Aorta (tissue), 5 donors: ENCODE measurements at regions of chr2 and their contacts with region 1.

Region 1: GRCh38 chr2:236343400-236344161 is 79.4 kb upstream of the ASB18 start:
- DNase-seq: peak in 1 of 2 donors; percentile 67
- ATAC-seq: no peak
- H3K4me3 ChIP-seq: no peak overlapping the region
- H3K27ac ChIP-seq: no peak overlapping the region
- H3K4me1 ChIP-seq: no peaks in the 10 kb centered on the region
- H3K27me3 ChIP-seq: no peaks in the 10 kb centered on the region

Region 2: DNA sequence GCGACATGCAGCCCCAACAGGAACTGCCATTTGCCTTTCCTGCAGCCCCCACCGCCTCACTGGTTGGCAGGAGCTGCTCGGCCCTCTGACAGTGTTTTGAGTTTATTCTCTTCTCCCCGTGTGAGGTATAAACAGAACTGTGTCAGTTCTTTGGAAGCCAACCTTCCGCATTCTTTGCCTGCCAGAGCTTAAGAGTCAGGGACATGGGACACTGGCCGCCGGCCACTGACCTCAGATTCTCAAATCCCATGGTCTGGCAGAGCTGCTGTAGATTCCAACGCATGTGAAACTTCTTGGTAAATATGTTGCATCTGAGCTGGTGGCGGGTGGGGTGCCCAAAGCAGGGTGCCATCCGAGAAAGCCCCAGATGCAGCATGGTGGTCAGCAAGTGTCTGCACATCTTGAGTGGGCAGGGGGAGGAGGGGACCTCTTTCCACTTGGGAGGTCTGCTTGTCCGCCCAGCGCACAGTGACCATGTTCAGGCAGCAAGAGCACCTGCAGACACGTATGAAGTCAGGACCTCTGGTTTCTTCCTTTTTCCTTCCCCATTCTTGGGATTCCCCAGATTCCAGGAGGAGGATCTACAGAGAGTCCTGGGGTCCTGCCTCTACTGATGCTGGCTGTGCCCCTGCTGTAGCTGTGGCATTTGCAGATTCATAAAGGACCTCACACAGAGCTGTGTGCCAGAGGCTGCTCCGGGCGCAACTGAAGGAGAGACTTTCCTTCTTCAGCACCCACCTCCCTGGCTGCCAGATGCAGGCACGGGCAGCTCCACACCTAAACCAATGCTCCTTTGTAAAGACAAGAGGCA is 103.1 kb before region 1 on chr2:
- intact Hi-C with region 1: no loop called
- DNase-seq: no peak
- ATAC-seq: no peak
- H3K4me3 ChIP-seq: no peak overlapping the region
- H3K27ac ChIP-seq: no peak overlapping the region
- H3K4me1 ChIP-seq: no peaks in the 10 kb centered on the region
- H3K27me3 ChIP-seq: no peaks in the 10 kb centered on the region

Region 3: GRCh38 chr2:237072067-237072931 is 728.7 kb after region 1 on chr2:
- intact Hi-C with region 1: loop called in 1 of 2 experiments (anchors 2 kb)
- DNase-seq: peak; percentile 82 to 91
- ATAC-seq: peak; percentile 85
- H3K4me3 ChIP-seq: no peak overlapping the region
- H3K27ac ChIP-seq: no peak overlapping the region
- H3K4me1 ChIP-seq: peaks cover 0 to 5% of the 10 kb centered on the region in 2 donors
- H3K27me3 ChIP-seq: no peaks in the 10 kb centered on the region